ENCODE measurements at regions of chr15 and their contacts with region 1.

Region 1: GRCh38 chr15:41774062-41774881 is at the start of gene MAPKBP1:
- DNase-seq: peak; percentile 96 to 98 (median 97)
- H3K4me3 ChIP-seq: peak within 1 kb of the TSS; percentile 64
- H3K27ac ChIP-seq: peak within 1 kb of the TSS; percentile 70 to 80
- H3K4me1 ChIP-seq: peaks cover 20% of the 10 kb centered on the region
- H3K27me3 ChIP-seq: no peaks in the 10 kb centered on the region
- CTCF ChIP-seq: peak; percentile 40 to 87 (median 84)
- EP300 ChIP-seq: no peak
- POLR2A ChIP-seq: peak; percentile 60
- total RNA-seq, gene MAPKBP1: 18.4 to 46.9 (median 38.9) TPM

Region 2: DNA sequence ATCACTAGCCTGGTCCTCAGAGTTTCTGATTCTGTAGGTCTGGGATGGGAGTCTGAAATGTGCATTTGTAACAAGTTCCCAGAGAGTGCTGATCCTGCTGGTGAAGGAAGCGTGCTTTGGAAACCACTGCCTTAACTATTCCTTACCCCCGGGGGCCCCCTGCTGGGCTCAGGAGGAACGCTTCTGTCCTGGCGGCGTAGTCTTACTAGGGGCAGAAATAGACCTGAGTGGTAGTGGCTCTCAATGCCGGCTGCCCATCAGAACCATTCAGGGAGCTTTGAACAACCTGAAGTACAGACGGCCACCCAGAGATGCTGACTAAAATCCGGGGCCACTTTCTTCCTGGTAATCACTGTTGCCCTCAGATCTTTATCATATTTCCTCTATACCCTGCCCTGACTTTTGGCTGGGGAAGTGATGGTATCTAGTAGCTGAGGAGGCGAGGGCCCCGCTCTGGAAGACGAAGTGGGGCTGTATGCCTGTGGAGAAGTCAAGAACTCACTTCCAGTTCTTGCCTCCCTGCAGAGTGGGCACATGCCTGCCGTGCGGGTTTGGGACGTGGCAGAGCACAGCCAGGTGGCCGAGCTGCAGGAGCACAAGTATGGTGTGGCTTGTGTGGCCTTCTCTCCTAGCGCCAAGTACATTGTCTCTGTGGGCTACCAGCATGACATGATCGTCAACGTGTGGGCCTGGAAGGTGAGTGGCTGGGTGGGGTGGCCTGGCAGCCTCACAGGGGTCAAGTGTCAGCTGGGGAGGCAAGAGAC is 37.3 kb after region 1 on chr15:
- intact Hi-C with region 1: loop called (anchors 2 to 5 kb)
- DNase-seq: peak; percentile 75 to 92 (median 89)
- H3K4me3 ChIP-seq: no peak overlapping the region
- H3K27ac ChIP-seq: no peak overlapping the region
- H3K4me1 ChIP-seq: no peaks in the 10 kb centered on the region
- H3K27me3 ChIP-seq: no peaks in the 10 kb centered on the region
- CTCF ChIP-seq: peak; percentile 70 to 90 (median 89)
- EP300 ChIP-seq: no peak
- POLR2A ChIP-seq: no peak

Region 3: GRCh38 chr15:41917767-41918430 is 143.6 kb after region 1 on chr15:
- intact Hi-C with region 1: loop called in 1 of 4 experiments (anchors 10 kb)
- DNase-seq: peak in 1 of 5 donors; percentile 37
- H3K4me3 ChIP-seq: no peak overlapping the region
- H3K27ac ChIP-seq: peak overlapping the region in 1 of 2 donors; percentile 15
- H3K4me1 ChIP-seq: peaks cover 31% of the 10 kb centered on the region
- H3K27me3 ChIP-seq: no peaks in the 10 kb centered on the region
- CTCF ChIP-seq: no peak
- EP300 ChIP-seq: no peak
- POLR2A ChIP-seq: no peak

Region 4: DNA sequence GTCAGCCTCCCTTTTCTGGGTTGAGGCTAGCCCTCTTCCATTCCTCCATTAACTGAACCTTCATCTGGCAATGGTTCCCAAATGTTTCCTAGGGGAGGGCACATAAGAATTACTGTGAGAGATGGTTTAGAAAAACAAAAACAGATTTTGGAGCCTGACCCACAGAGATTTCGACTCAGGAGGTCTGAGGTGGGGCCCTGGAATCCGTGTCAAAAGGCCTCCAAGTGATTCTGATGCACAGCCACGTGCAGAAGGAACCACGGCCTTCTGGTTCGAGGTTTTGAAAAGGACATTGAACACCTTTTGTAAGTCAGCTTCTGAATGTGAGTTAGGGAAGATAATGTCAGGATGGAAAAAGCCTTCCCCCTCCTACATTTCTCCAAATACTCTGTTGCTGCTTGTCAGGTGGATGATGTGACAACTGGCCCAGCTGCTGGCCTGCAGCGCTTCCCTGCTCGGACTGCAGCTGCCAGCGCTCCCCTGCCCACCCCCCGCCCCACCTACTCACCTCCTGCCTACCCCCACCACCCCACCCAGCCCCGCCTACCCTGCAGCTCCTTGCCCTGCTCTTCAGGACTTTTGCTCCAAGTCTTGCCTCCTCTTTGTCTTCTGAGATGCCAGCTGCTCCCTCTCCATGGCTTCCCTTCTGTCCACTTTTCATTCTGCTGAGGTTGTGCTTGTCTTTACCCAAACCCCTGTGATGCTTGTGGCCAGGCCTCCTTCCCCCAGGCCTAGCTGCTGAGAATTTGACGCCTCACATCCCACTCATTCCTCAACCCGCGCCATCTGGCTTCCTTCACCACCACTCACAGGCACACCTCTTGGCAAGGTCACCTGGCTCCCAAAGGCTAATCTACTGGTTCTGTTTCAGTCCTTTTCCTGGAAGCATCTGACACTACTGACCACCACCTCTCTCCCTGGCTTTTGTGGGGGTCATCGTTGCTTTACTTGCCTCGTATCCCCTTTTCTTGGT is 191.5 kb after region 1 on chr15:
- intact Hi-C with region 1: no loop called
- DNase-seq: no peak
- H3K4me3 ChIP-seq: no peak overlapping the region
- H3K27ac ChIP-seq: no peak overlapping the region
- H3K4me1 ChIP-seq: peaks cover 4% of the 10 kb centered on the region
- H3K27me3 ChIP-seq: no peaks in the 10 kb centered on the region
- CTCF ChIP-seq: no peak
- EP300 ChIP-seq: no peak
- POLR2A ChIP-seq: no peak

Measured in ovary (tissue), 10 donors.